Lower leg skin (tissue), 4 donors: ENCODE measurements at regions of chr2 and their contacts with region 1.

Region 1: GRCh38 chr2:200901459-200902072 is 12.4 kb downstream of the NIF3L1 start:
- DNase-seq: peak in 1 of 2 donors; percentile 77
- H3K4me3 ChIP-seq: no peak overlapping the region
- CTCF ChIP-seq: peak in 1 of 3 donors; percentile 76
- POLR2A ChIP-seq: no peak

Region 2: DNA sequence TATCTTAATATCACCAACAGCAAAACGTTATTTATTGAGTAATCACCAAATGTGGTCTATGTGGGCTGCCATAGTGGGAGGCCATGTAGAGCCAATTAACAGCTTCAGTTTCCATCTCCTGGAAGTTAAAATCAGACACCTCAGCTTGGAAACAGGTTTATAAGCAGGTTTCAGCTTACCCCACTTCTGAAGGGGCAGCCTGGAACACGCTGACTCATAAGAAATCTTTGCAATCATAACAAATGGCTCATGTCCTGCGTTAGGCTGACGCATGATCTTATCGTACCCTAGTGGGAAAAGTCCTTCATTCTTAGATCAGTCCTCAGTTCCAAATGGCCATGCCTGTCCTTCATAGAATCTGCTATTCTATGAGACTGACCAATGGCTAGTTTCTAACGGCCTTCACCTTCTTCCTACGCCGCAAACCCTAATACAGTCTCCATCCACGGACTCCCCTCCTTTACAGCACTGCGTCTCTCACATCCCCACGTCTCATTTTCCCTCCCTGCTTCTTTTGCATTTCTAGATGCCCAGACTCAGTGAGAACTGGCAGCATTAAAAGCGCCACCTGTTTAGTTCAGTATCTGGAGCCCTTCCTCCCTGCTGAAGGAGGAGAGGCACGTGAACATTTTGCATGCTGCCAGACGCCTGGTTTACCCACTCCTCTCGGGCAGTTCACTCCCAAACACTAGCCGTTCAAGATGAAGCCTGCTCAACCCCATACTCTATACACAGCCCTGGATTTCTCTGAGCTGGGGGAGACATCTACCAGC is 114.0 kb before region 1 on chr2:
- intact Hi-C with region 1: no loop called
- DNase-seq: no peak
- H3K4me3 ChIP-seq: no peak overlapping the region
- CTCF ChIP-seq: no peak
- POLR2A ChIP-seq: no peak

Region 3: GRCh38 chr2:201059961-201060755 is 158.6 kb after region 1 on chr2:
- intact Hi-C with region 1: loop called (anchors 10 kb)
- DNase-seq: no peak
- H3K4me3 ChIP-seq: no peak overlapping the region
- CTCF ChIP-seq: no peak
- POLR2A ChIP-seq: no peak

Region 4: DNA sequence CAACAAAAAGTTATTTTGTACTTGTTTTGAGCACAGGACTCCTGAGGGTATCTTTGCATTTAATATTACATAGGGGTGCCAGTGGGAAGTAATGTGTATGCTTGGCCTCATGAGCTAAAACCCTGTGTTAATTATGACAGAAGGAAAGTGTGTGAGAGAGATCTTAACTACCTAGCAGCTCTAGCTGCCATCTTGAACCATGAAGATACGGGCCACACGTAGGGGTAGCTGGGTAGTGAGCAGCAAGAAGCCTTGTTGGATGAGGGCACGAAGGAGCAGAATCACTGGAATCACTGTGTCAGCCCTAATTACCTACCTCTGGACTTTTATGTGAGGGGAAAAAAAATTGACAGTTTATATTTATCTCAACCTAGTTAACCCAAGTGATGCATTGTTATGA is 266.0 kb after region 1 on chr2:
- intact Hi-C with region 1: loop called (anchors 10 kb)
- DNase-seq: no peak
- H3K4me3 ChIP-seq: no peak overlapping the region
- CTCF ChIP-seq: no peak
- POLR2A ChIP-seq: no peak

Region 5: DNA sequence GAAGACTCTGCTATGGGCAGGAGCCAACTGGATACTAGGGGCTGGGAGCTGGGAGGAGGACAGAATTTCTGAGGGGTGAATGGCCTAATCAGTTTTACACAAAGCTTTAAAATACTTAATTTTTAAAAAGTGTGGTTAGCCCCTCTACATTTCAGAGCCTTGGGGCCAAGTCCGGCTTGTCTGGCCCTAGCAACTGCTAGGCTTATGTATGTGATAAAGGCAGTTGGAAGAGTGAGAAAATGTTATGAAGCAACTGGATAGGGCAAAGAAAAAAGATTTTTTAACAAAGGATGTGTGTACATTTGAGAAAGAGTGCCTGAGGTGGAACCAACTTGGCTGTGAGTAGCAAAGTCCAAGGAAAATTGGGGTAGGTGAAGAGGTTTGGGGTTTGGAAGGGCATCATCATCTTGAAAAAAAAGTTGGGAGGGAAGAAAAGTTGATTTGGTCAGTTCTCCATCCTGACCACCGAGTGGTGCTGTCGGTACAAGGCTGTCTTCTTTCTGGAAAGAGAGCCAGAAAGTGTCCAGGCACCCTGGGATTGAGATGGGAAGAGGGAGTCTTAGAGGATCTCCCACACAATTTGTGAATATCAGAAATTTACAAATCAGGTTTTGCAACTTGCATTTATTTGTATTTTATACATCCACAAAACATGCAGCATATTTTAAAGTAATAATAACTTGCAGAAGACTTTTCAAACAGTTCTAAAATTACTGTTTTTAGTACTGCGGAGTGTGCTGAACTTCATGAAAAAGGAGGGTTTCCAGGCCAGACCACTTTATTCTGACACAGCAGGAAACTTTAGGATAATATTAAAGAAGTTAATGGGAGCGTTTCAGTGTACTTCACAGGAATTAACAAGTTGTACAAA is 894.3 kb after region 1 on chr2:
- intact Hi-C with region 1: no loop called
- DNase-seq: no peak
- H3K4me3 ChIP-seq: no peak overlapping the region
- CTCF ChIP-seq: no peak
- POLR2A ChIP-seq: no peak